ENCODE measurements at regions of chr15 and their contacts with region 1.

Region 1: GRCh38 chr15:40593588-40594428 is at the start of gene KNL1:
- DNase-seq: peak; percentile 83 to 94 (median 90)
- ATAC-seq: peak; percentile 95 to 97 (median 96)
- H3K4me3 ChIP-seq: peak within 1 kb of the TSS; percentile 51 to 80 (median 60)
- H3K27ac ChIP-seq: peak within 1 kb of the TSS; percentile 83 to 98 (median 88)
- H3K4me1 ChIP-seq: peaks cover 0 to 24% (median 7%) of the 10 kb centered on the region in 12 donors
- H3K27me3 ChIP-seq: no peaks in the 10 kb centered on the region
- CTCF ChIP-seq: peak in 1 of 12 donors; percentile 0
- POLR2A ChIP-seq: no peak
- total RNA-seq, gene KNL1: 0.11 to 5.9 (median 1.0) TPM in 8 of 9 donors, not detected in the other

Region 2: GRCh38 chr15:40660686-40661085 is 66.9 kb after region 1 on chr15:
- intact Hi-C with region 1: no loop called
- DNase-seq: no peak
- ATAC-seq: no peak
- H3K4me3 ChIP-seq: no peak overlapping the region
- H3K27ac ChIP-seq: no peak overlapping the region
- H3K4me1 ChIP-seq: no peaks in the 10 kb centered on the region
- H3K27me3 ChIP-seq: no peaks in the 10 kb centered on the region
- CTCF ChIP-seq: no peak
- POLR2A ChIP-seq: no peak

Region 3: GRCh38 chr15:40763801-40764732 is 170.3 kb after region 1 on chr15 and contains the start of gene GCHFR:
- intact Hi-C with region 1: loop called in 1 of 10 experiments (anchors 10 kb)
- DNase-seq: peak; percentile 70 to 87 (median 74)
- ATAC-seq: peak; percentile 26 to 78 (median 74)
- H3K4me3 ChIP-seq: peak within 1 kb of the TSS; percentile 33 to 75 (median 58)
- H3K27ac ChIP-seq: peak within 1 kb of the TSS in 11 of 12 donors; percentile 47 to 80 (median 62)
- H3K4me1 ChIP-seq: peaks cover 0 to 46% (median 23%) of the 10 kb centered on the region in 12 donors
- H3K27me3 ChIP-seq: no peaks in the 10 kb centered on the region
- CTCF ChIP-seq: peak in 10 of 12 donors; percentile 8 to 55 (median 35)
- POLR2A ChIP-seq: peak in 1 of 2 donors; percentile 59
- total RNA-seq, gene GCHFR: 1.6 to 24.0 (median 6.6) TPM

Region 4: GRCh38 chr15:40787344-40787841 is 193.6 kb after region 1 on chr15:
- intact Hi-C with region 1: no loop called
- DNase-seq: no peak
- ATAC-seq: peak in 2 of 4 donors; percentile 36 to 43
- H3K4me3 ChIP-seq: no peak overlapping the region
- H3K27ac ChIP-seq: peak overlapping the region in 1 of 12 donors; percentile 15
- H3K4me1 ChIP-seq: peaks cover 0 to 25% (median 13%) of the 10 kb centered on the region in 12 donors
- H3K27me3 ChIP-seq: no peaks in the 10 kb centered on the region
- CTCF ChIP-seq: no peak
- POLR2A ChIP-seq: no peak

Measured in heart left ventricle (tissue), 16 donors.